Mammary epithelial cell (primary cell): ENCODE measurements at regions of chr3 and their contacts with region 1.

Region 1: GRCh38 chr3:53921296-53921695 is 29.6 kb upstream of the SELENOK start:
- DNase-seq: peak; percentile 19
- H3K4me3 ChIP-seq: no peak overlapping the region
- H3K27ac ChIP-seq: no peak overlapping the region
- H3K4me1 ChIP-seq: no peaks in the 10 kb centered on the region
- H3K27me3 ChIP-seq: no peaks in the 10 kb centered on the region
- CTCF ChIP-seq: peak; percentile 41 to 69

Region 2: GRCh38 chr3:53375019-53375418 is 546.3 kb before region 1 on chr3:
- CTCF ChIA-PET with region 1: no interaction called
- dilution Hi-C with region 1: no loop called
- in situ Hi-C with region 1: loop called (anchors 25 kb)
- intact Hi-C with region 1: loop called (anchors 2 kb)
- DNase-seq: peak; percentile 28
- H3K4me3 ChIP-seq: no peak overlapping the region
- H3K27ac ChIP-seq: no peak overlapping the region
- H3K4me1 ChIP-seq: no peaks in the 10 kb centered on the region
- H3K27me3 ChIP-seq: no peaks in the 10 kb centered on the region
- CTCF ChIP-seq: peak; percentile 93 to 94

Region 3: DNA sequence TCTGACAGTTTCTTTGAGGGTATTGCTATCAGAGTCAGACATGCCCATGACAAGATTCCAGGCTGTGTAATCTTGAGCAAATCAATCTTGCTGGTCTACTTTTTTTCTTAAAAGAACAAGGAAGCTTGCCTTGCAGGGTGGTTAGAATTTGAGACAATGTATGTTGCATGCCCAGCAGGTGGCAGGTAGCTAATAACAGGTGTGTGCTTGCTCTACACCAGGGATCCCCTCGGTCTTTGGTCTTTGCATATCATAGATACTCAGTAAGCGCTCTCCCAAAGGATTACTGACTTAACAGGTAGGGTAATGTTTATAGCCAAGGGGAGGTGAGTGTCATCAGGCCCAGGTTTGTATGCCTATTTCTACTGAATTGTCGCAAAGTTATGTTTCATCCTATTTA is 389.5 kb before region 1 on chr3:
- CTCF ChIA-PET with region 1: no interaction called
- dilution Hi-C with region 1: no loop called
- in situ Hi-C with region 1: no loop called
- intact Hi-C with region 1: loop called (anchors 5 kb)
- DNase-seq: no peak
- H3K4me3 ChIP-seq: no peak overlapping the region
- H3K27ac ChIP-seq: no peak overlapping the region
- H3K4me1 ChIP-seq: no peaks in the 10 kb centered on the region
- H3K27me3 ChIP-seq: peaks cover 4% of the 10 kb centered on the region
- CTCF ChIP-seq: peak; percentile 16 to 51

Region 4: GRCh38 chr3:53668872-53669271 is 252.4 kb before region 1 on chr3:
- CTCF ChIA-PET with region 1: no interaction called
- dilution Hi-C with region 1: no loop called
- in situ Hi-C with region 1: no loop called
- intact Hi-C with region 1: loop called (anchors 2 kb)
- DNase-seq: no peak
- H3K4me3 ChIP-seq: no peak overlapping the region
- H3K27ac ChIP-seq: no peak overlapping the region
- H3K4me1 ChIP-seq: no peaks in the 10 kb centered on the region
- H3K27me3 ChIP-seq: peaks cover 1% of the 10 kb centered on the region
- CTCF ChIP-seq: peak; percentile 32 to 51

Region 5: DNA sequence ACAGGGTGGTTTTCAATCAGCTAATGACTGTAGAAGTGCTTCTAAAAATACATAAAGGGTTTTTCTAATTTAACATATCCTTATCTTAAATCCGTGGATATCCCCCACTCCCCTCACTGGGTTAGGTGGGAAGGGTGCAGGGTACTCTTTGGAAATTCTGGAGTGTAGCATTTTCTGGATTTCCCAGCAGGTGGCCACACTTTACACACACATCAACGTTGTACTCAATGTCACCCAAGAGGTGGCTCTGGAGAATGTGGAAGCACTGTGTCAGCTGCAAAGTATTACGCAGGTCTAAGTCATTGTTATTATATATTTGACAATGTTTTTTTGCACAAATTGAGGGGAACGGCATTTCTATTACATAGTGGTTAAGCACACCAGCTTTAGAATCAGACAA is 243.9 kb before region 1 on chr3:
- CTCF ChIA-PET with region 1: no interaction called
- dilution Hi-C with region 1: no loop called
- in situ Hi-C with region 1: no loop called
- intact Hi-C with region 1: loop called (anchors 2 kb)
- DNase-seq: no peak
- H3K4me3 ChIP-seq: no peak overlapping the region
- H3K27ac ChIP-seq: no peak overlapping the region
- H3K4me1 ChIP-seq: no peaks in the 10 kb centered on the region
- H3K27me3 ChIP-seq: peaks cover 1% of the 10 kb centered on the region
- CTCF ChIP-seq: peak; percentile 15 to 38

Region 6: DNA sequence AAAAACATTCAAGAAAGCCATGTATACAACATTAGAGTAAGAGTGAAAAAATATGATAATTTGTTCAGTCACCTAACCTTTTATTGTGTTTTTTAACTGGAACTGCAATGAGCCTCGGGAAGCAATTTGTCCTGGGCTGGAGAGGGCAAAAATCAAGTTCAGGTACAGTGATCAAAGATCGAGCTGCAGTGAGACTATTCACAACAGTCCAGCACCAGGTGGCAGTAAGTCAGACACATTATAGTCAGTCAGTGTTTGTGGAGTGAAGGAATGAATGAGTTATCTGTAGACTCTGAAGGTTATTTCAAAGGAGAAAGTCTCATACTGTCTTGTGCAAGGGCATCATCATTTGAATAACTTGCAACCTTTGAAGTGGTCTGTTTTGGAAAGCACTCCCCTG is 191.7 kb before region 1 on chr3:
- CTCF ChIA-PET with region 1: no interaction called
- dilution Hi-C with region 1: no loop called
- in situ Hi-C with region 1: no loop called
- intact Hi-C with region 1: loop called (anchors 1 kb)
- DNase-seq: peak; percentile 5
- H3K4me3 ChIP-seq: no peak overlapping the region
- H3K27ac ChIP-seq: no peak overlapping the region
- H3K4me1 ChIP-seq: no peaks in the 10 kb centered on the region
- H3K27me3 ChIP-seq: no peaks in the 10 kb centered on the region
- CTCF ChIP-seq: peak; percentile 13 to 42